Caco-2 (cell line): ENCODE measurements at regions of chr1 and their contacts with region 1.

Region 1: DNA sequence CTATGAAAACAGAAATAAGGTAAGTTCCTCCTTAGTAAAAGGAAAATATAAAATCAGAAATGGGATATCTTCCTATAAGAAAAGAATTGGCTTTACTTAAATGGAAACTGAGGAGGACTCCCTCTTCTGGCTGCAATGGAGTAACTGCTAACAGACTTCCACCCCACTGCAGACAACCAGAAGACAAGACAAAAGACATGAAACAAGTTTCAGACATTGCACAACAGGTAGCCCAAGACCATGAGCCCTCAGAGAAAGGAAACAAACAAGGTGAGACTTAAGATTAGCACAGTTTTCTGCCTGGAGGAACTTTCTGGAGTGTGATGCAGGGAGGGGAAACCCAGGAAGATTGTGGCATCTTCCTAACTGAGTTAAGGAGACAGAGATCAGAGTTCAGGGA is 17.0 kb upstream of the OLFML2B start:
- DNase-seq: peak in 1 of 2 experiments; percentile 29
- H3K4me3 ChIP-seq: no peak overlapping the region
- H3K4me3 Mint-ChIP-seq: no peak overlapping the region
- H3K27ac Mint-ChIP-seq: no peak overlapping the region
- H3K4me1 ChIP-seq: no peaks in the 10 kb centered on the region
- H3K4me1 Mint-ChIP-seq: peaks cover 6% of the 10 kb centered on the region
- H3K27me3 ChIP-seq: no peaks in the 10 kb centered on the region
- H3K27me3 Mint-ChIP-seq: peaks cover 2% of the 10 kb centered on the region
- CTCF ChIP-seq: peak; percentile 46 to 48

Region 2: GRCh38 chr1:161749509-161750407 is 290.9 kb before region 1 on chr1 and contains the start of gene DUSP12:
- CTCF ChIA-PET with region 1: interaction called, 10 read pairs
- POLR2A ChIA-PET with region 1: no interaction called
- intact Hi-C with region 1: no loop called
- DNase-seq: peak; percentile 95
- H3K4me3 ChIP-seq: peak within 1 kb of the TSS; percentile 99
- H3K4me3 Mint-ChIP-seq: peak within 1 kb of the TSS; percentile 91
- H3K27ac Mint-ChIP-seq: peak within 1 kb of the TSS; percentile 96
- H3K4me1 ChIP-seq: peaks cover 6% of the 10 kb centered on the region; the same call in 1 of the 2 replicates
- H3K4me1 Mint-ChIP-seq: peaks cover 8% of the 10 kb centered on the region
- H3K27me3 ChIP-seq: no peaks in the 10 kb centered on the region
- H3K27me3 Mint-ChIP-seq: peaks cover 9% of the 10 kb centered on the region
- CTCF ChIP-seq: peak in 1 of 2 experiments; percentile 22
- total RNA-seq, gene DUSP12: 51.2 and 54.9 TPM in 2 replicates

Region 3: DNA sequence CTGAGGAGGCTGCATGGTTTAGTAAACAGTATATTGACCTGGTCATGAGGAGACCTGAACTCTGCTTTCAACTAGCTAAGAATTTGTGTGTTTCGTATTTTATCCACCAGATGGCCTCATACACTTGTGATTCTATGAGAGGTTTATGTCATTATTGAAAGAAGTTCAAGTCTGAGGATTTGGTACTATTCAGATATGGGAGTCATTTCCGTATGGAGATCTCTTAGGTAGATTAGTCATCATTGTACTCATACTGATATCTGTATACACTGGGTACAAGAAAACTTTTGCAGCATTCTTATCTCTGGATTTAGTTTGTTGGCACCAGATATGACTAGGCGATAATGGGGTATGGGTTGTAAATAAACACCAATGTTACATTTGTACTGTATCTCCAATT is 247.9 kb before region 1 on chr1:
- CTCF ChIA-PET with region 1: interaction called, 202 read pairs
- POLR2A ChIA-PET with region 1: interaction called, 3 read pairs
- intact Hi-C with region 1: loop called (anchors 1 kb)
- DNase-seq: peak in 1 of 2 experiments; percentile 50
- H3K4me3 ChIP-seq: no peak overlapping the region
- H3K4me3 Mint-ChIP-seq: no peak overlapping the region
- H3K27ac Mint-ChIP-seq: no peak overlapping the region
- H3K4me1 ChIP-seq: no peaks in the 10 kb centered on the region
- H3K4me1 Mint-ChIP-seq: no peaks in the 10 kb centered on the region
- H3K27me3 ChIP-seq: no peaks in the 10 kb centered on the region
- H3K27me3 Mint-ChIP-seq: no peaks in the 10 kb centered on the region
- CTCF ChIP-seq: peak; percentile 34 to 56

Region 4: GRCh38 chr1:161864577-161864976 is 176.1 kb before region 1 on chr1:
- CTCF ChIA-PET with region 1: interaction called, 17 read pairs
- POLR2A ChIA-PET with region 1: no interaction called
- intact Hi-C with region 1: loop called (anchors 1 kb)
- DNase-seq: peak in 1 of 2 experiments; percentile 15
- H3K4me3 ChIP-seq: no peak overlapping the region
- H3K4me3 Mint-ChIP-seq: no peak overlapping the region
- H3K27ac Mint-ChIP-seq: no peak overlapping the region
- H3K4me1 ChIP-seq: peaks cover 9% of the 10 kb centered on the region
- H3K4me1 Mint-ChIP-seq: peaks cover 7% of the 10 kb centered on the region
- H3K27me3 ChIP-seq: no peaks in the 10 kb centered on the region
- H3K27me3 Mint-ChIP-seq: no peaks in the 10 kb centered on the region
- CTCF ChIP-seq: peak; percentile 22 to 60

Region 5: GRCh38 chr1:162023547-162024501 is 16.9 kb before region 1 on chr1 and contains the start of gene OLFML2B:
- CTCF ChIA-PET with region 1: interaction called, 14 read pairs
- POLR2A ChIA-PET with region 1: no interaction called
- intact Hi-C with region 1: no loop called
- DNase-seq: peak; percentile 54 to 69
- H3K4me3 ChIP-seq: peak within 1 kb of the TSS; percentile 55
- H3K4me3 Mint-ChIP-seq: peak within 1 kb of the TSS; percentile 78
- H3K27ac Mint-ChIP-seq: no peak within 1 kb of the TSS
- H3K4me1 ChIP-seq: no peaks in the 10 kb centered on the region; the same call in 1 of the 2 replicates
- H3K4me1 Mint-ChIP-seq: no peaks in the 10 kb centered on the region
- H3K27me3 ChIP-seq: peaks cover 1% of the 10 kb centered on the region; the same call in 1 of the 2 replicates
- H3K27me3 Mint-ChIP-seq: peaks cover 6% of the 10 kb centered on the region
- CTCF ChIP-seq: no peak
- total RNA-seq, gene OLFML2B: 0.43 and 0.56 TPM in 2 replicates